Dorsolateral prefrontal cortex (tissue), 120 donors: ENCODE measurements at regions of chr5 and their contacts with region 1.

Region 1: DNA sequence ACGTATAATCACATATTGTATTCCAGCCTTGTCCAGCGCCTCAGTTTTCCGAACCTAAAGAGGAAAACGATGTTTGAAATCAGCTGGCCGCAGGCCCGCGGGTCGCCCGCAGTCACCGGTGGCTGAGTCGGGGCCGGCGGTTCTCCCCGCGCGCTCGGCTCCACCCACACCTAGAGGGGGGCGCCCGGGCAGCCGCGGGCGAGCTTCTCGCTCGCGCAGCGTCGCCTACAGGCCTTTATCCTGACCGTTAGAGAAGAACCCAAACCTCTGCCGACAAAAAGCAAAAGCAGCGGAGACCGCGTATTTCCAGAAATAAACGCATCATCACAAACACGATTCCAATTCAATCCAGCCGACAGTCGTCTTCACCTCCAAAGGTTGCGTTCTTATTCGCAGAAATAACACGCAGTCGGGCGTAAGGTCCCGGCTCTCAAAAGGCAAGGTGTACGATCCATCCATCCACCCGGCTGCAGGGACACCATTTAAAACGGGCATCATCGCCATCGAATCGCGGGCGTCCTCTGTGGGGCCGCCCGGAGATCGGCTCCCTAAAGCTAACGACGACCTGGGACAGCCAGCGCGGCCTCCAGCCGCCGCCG is 680 bp upstream of the NIPBL start:
- DNase-seq: peak; percentile 72 to 88 (median 79)
- H3K4me3 ChIP-seq: peak overlapping the region; percentile 56 to 98 (median 88)
- H3K27ac ChIP-seq: peak overlapping the region; percentile 89 to 100 (median 98)
- H3K27me3 ChIP-seq: no peaks in the 10 kb centered on the region
- CTCF ChIP-seq: peak; percentile 15 to 70 (median 55)

Region 2: GRCh38 chr5:36414869-36415282 is 461.0 kb before region 1 on chr5:
- intact Hi-C with region 1: loop called in 1 of 2 experiments (anchors 10 kb)
- DNase-seq: no peak
- H3K4me3 ChIP-seq: no peak overlapping the region
- H3K27ac ChIP-seq: peak overlapping the region in 2 of 59 donors; percentile 8 to 38
- H3K27me3 ChIP-seq: no peaks in the 10 kb centered on the region
- CTCF ChIP-seq: peak; percentile 49 to 90 (median 72)

Region 3: GRCh38 chr5:36657563-36657995 is 218.3 kb before region 1 on chr5:
- intact Hi-C with region 1: no loop called
- DNase-seq: peak in 2 of 10 donors; percentile 19 to 63
- H3K4me3 ChIP-seq: peak overlapping the region in 8 of 59 donors; percentile 3 to 28 (median 11)
- H3K27ac ChIP-seq: peak overlapping the region in 56 of 59 donors; percentile 47 to 97 (median 92)
- H3K27me3 ChIP-seq: no peaks in the 10 kb centered on the region
- CTCF ChIP-seq: no peak

Region 4: GRCh38 chr5:36744773-36745589 is 130.9 kb before region 1 on chr5:
- intact Hi-C with region 1: loop called (anchors 2 to 5 kb)
- DNase-seq: peak in 8 of 10 donors; percentile 7 to 76 (median 56)
- H3K4me3 ChIP-seq: peak overlapping the region; percentile 34 to 74 (median 64)
- H3K27ac ChIP-seq: peak overlapping the region in 4 of 59 donors; percentile 4 to 14 (median 6)
- H3K27me3 ChIP-seq: no peaks in the 10 kb centered on the region
- CTCF ChIP-seq: peak in 31 of 56 donors; percentile 7 to 79 (median 54)

Region 5: DNA sequence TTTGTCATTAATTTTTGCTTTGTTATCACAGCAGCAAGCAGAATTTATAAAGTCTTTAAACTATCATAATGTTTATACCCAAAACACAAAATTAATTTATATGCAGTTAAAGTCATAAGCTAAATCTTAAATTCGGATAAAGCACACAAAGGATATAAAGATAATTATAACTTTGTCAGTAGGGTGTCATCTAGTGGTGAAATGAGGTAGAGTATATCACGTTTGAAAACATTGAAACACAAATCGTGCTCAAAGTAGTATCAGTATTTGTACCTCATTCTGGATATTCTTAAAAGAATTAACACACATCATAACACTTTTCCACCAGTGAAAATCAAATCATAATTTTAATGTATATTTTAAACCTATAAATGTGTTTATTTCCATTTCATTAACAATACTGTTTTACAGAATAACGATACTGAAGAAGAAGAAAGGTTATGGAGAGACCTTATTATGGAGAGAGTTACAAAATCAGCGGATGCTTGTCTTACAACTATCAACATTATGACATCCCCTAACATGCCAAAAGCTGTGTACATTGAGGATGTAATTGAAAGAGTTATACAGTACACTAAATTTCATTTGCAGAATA is 130.2 kb after region 1 on chr5:
- intact Hi-C with region 1: loop called (anchors 10 kb)
- DNase-seq: no peak
- H3K4me3 ChIP-seq: no peak overlapping the region
- H3K27ac ChIP-seq: peak overlapping the region in 2 of 59 donors; percentile 10 to 13
- H3K27me3 ChIP-seq: no peaks in the 10 kb centered on the region
- CTCF ChIP-seq: peak; percentile 55 to 84 (median 73)

Region 6: DNA sequence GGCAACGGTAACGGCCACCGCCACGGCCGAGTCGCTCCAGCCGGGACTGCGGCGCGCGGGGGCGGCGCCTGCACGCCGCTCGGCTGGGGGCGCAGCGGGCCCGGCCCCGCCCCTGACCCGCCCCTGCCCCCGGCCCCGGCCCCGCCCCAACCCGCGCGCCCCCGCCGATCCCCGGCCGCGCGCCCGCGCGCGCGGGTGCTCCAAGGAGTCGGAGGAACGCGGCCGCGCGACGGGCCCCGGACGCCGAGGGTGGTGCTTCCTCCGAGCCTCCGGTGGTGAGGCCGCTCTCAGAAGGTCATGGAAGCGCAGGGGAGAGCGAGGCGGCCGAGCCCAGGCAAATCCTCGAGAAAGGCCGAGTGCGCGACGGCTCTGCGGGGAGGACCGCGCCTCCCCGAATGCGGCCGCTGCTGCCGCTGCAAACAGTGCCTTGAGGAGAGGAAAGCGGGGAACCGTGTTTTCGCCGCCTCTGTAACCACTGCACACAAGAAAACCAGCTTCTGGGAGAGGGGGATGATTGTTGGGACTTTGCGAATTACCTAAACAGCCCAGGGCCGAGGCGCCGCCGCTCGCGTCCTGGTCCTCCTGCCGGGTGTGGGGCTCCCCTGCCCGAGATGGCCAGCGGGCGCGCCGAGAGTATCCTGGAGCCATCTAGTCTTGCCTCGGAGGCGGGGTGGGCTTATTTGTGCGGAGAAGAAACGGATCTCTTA is 1680.9 kb after region 1 on chr5 and contains the start of gene LIFR:
- intact Hi-C with region 1: loop called in 1 of 2 experiments (anchors 5 kb)
- DNase-seq: peak; percentile 68 to 86 (median 84)
- H3K4me3 ChIP-seq: peak within 1 kb of the TSS; percentile 70 to 98 (median 90)
- H3K27ac ChIP-seq: peak within 1 kb of the TSS; percentile 91 to 100 (median 99)
- H3K27me3 ChIP-seq: no peaks in the 10 kb centered on the region
- CTCF ChIP-seq: peak in 19 of 56 donors; percentile 7 to 40 (median 17)
- total RNA-seq, gene LIFR: 63.9 to 237 (median 123) TPM